Gastrocnemius medialis (tissue), 4 donors: ENCODE measurements at regions of chr3 and their contacts with region 1.

Region 1: GRCh38 chr3:79086514-79086913 is 681.3 kb downstream of the ROBO1 start:
- DNase-seq: peak in 1 of 2 donors; percentile 11
- ATAC-seq: peak in 1 of 2 donors; percentile 62
- H3K4me3 ChIP-seq: peak overlapping the region in 1 of 4 donors; percentile 10
- H3K27ac ChIP-seq: no peak overlapping the region
- H3K4me1 ChIP-seq: no peaks in the 10 kb centered on the region
- H3K27me3 ChIP-seq: no peaks in the 10 kb centered on the region
- CTCF ChIP-seq: peak in 4 of 5 experiments; percentile 27 to 60 (median 48)
- POLR2A ChIP-seq: no peak

Region 2: DNA sequence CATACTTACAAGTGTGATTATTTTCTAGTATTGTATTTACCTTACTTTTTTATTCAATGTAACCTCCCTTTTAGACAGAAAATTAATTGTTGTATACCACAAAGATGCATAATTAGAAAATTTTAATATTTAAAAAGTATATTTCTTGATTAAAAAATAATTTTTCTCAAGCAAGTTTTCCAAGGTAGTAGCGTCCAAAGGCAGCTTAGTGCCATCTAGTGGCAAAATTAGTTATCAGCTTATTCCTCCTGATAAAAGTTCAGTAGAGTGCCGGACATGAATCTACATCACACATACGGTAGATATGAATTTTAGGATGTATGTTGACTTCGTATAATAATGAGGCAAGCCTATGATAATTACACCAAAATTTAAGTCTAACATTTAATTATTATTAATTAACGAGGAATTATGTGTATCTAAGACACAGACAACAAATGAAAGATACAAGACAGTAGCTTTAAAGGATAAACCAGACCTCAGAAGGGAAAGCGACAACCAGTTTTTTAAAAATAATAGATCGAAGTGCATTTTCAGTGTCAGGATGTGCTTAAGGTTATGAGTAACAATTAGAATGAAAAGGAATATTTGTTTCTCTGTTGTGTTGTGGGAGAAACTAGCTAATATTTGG is 275.3 kb after region 1 on chr3:
- in situ Hi-C with region 1: loop called in 1 of 4 experiments (anchors 25 kb)
- intact Hi-C with region 1: loop called (anchors 2 kb)
- DNase-seq: no peak
- ATAC-seq: no peak
- H3K4me3 ChIP-seq: no peak overlapping the region
- H3K27ac ChIP-seq: no peak overlapping the region
- H3K4me1 ChIP-seq: no peaks in the 10 kb centered on the region
- H3K27me3 ChIP-seq: no peaks in the 10 kb centered on the region
- CTCF ChIP-seq: peak in 3 of 5 experiments; percentile 14 to 62 (median 59)
- POLR2A ChIP-seq: no peak